ENCODE measurements at regions of chr2 and their contacts with region 1.

Region 1: GRCh38 chr2:86562922-86563649 is at the start of gene CHMP3:
- DNase-seq: peak; percentile 96 to 99 (median 98)
- ATAC-seq: peak; percentile 97 to 99 (median 98)
- H3K4me3 ChIP-seq: peak within 1 kb of the TSS; percentile 67 to 97 (median 80)
- H3K27ac ChIP-seq: peak within 1 kb of the TSS; percentile 98 to 100 (median 99)
- H3K4me1 ChIP-seq: peaks cover 0 to 50% (median 29%) of the 10 kb centered on the region in 12 donors
- H3K27me3 ChIP-seq: no peaks in the 10 kb centered on the region
- CTCF ChIP-seq: no peak
- POLR2A ChIP-seq: peak in 1 of 2 donors; percentile 58
- total RNA-seq, gene CHMP3: 75.4 to 178 (median 145) TPM

Region 2: GRCh38 chr2:86221066-86221684 is 341.9 kb before region 1 on chr2:
- intact Hi-C with region 1: loop called in 1 of 10 experiments (anchors 5 kb)
- DNase-seq: peak in 2 of 5 donors; percentile 48 to 50
- ATAC-seq: peak in 1 of 4 donors; percentile 14
- H3K4me3 ChIP-seq: no peak overlapping the region
- H3K27ac ChIP-seq: peak overlapping the region in 4 of 12 donors; percentile 3 to 92 (median 90)
- H3K4me1 ChIP-seq: peaks cover 11 to 59% (median 45%) of the 10 kb centered on the region in 12 donors
- H3K27me3 ChIP-seq: no peaks in the 10 kb centered on the region
- CTCF ChIP-seq: peak; percentile 68 to 96 (median 92)
- POLR2A ChIP-seq: no peak

Region 3: GRCh38 chr2:86453836-86454235 is 109.2 kb before region 1 on chr2:
- intact Hi-C with region 1: loop called in 2 of 10 experiments (anchors 5 to 10 kb)
- DNase-seq: peak in 4 of 5 donors; percentile 58 to 76 (median 70)
- ATAC-seq: peak; percentile 71 to 87 (median 81)
- H3K4me3 ChIP-seq: no peak overlapping the region
- H3K27ac ChIP-seq: peak overlapping the region in 9 of 12 donors; percentile 8 to 44 (median 21)
- H3K4me1 ChIP-seq: peaks cover 0 to 61% (median 40%) of the 10 kb centered on the region in 12 donors
- H3K27me3 ChIP-seq: no peaks in the 10 kb centered on the region
- CTCF ChIP-seq: no peak
- POLR2A ChIP-seq: no peak

Region 4: DNA sequence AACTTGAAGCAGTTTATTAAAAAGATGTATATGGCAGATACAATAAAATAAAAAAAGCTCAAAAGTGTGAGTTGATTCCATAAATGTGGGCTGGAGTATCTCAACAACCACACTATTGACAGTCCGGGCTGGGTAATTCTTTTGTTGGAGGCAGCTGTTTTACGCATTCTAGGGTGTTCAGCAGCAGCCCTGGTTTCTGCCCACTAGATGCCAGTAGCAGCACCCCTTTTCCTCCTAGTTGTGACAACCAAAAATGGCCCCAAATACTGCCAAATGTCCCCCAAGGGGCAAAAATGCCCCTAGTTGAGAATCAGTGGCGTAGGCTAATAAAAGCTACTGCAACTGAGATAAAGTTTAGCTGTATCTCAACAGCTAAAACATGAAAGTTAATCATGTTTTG is 44.6 kb before region 1 on chr2:
- intact Hi-C with region 1: loop called in 1 of 10 experiments (anchors 5 kb)
- DNase-seq: no peak
- ATAC-seq: peak in 3 of 4 donors; percentile 61 to 63 (median 63)
- H3K4me3 ChIP-seq: no peak overlapping the region
- H3K27ac ChIP-seq: peak overlapping the region in 1 of 12 donors; percentile 12
- H3K4me1 ChIP-seq: peaks cover 0 to 13% (median 2%) of the 10 kb centered on the region in 12 donors
- H3K27me3 ChIP-seq: no peaks in the 10 kb centered on the region
- CTCF ChIP-seq: peak in 11 of 12 donors; percentile 12 to 59 (median 45)
- POLR2A ChIP-seq: no peak

Region 5: GRCh38 chr2:86598966-86599365 is 35.9 kb after region 1 on chr2:
- intact Hi-C with region 1: loop called in 1 of 10 experiments (anchors 5 kb)
- DNase-seq: no peak
- ATAC-seq: no peak
- H3K4me3 ChIP-seq: no peak overlapping the region
- H3K27ac ChIP-seq: peak overlapping the region in 3 of 12 donors; percentile 6 to 28 (median 12)
- H3K4me1 ChIP-seq: peaks cover 0 to 26% (median 2%) of the 10 kb centered on the region in 12 donors
- H3K27me3 ChIP-seq: no peaks in the 10 kb centered on the region
- CTCF ChIP-seq: no peak
- POLR2A ChIP-seq: no peak

Region 6: GRCh38 chr2:86661333-86661732 is 98.2 kb after region 1 on chr2:
- intact Hi-C with region 1: no loop called
- DNase-seq: no peak
- ATAC-seq: no peak
- H3K4me3 ChIP-seq: no peak overlapping the region
- H3K27ac ChIP-seq: no peak overlapping the region
- H3K4me1 ChIP-seq: no peaks in the 10 kb centered on the region
- H3K27me3 ChIP-seq: no peaks in the 10 kb centered on the region
- CTCF ChIP-seq: no peak
- POLR2A ChIP-seq: no peak